ENCODE measurements at regions of chr17 and their contacts with region 1.

Region 1: DNA sequence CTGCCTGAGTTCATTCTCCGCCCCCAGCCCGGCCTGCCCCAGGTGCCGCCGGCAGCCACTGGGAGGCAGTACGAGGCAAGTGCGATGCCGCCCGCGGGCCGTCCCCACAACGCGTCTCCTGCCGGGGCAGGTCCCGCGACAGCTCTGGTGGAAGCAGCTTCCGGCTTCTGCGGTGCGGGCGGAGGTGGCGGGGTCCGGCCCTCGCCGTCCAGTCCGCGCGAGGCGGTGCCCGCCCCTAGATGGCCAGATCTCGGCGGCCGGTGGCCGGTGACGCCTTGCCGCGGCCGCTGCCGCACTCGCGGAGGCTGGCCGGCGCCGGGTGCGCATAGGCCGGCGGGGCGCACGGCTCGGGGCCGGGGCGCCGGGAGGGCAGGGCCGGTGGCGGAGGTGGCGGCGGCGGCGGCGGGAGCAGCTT is 1.8 kb downstream of the GJD3 start:
- DNase-seq: peak; percentile 68 to 87 (median 74)
- ATAC-seq: peak; percentile 82
- H3K4me3 ChIP-seq: peak overlapping the region; percentile 36
- H3K4me3 Mint-ChIP-seq: peak overlapping the region; percentile 14
- H3K27ac ChIP-seq: no peak overlapping the region
- H3K27ac Mint-ChIP-seq: no peak overlapping the region
- H3K4me1 ChIP-seq: peaks cover 23% of the 10 kb centered on the region
- H3K4me1 Mint-ChIP-seq: peaks cover 16% of the 10 kb centered on the region
- H3K27me3 ChIP-seq: peaks cover 0 to 13% of the 10 kb centered on the region in 2 experiments
- H3K27me3 Mint-ChIP-seq: peaks cover 17% of the 10 kb centered on the region
- CTCF ChIP-seq: peak; percentile 56

Region 2: GRCh38 chr17:40018211-40019121 is 344.2 kb before region 1 on chr17:
- CTCF ChIA-PET with region 1: no interaction called
- POLR2A ChIA-PET with region 1: no interaction called
- intact Hi-C with region 1: loop called in 1 of 2 experiments (anchors 5 kb)
- DNase-seq: no peak
- ATAC-seq: no peak
- H3K4me3 ChIP-seq: no peak overlapping the region
- H3K4me3 Mint-ChIP-seq: no peak overlapping the region
- H3K27ac ChIP-seq: no peak overlapping the region
- H3K27ac Mint-ChIP-seq: no peak overlapping the region
- H3K4me1 ChIP-seq: peaks cover 5% of the 10 kb centered on the region
- H3K4me1 Mint-ChIP-seq: peaks cover 6% of the 10 kb centered on the region
- H3K27me3 ChIP-seq: no peaks in the 10 kb centered on the region
- H3K27me3 Mint-ChIP-seq: no peaks in the 10 kb centered on the region
- CTCF ChIP-seq: no peak

Region 3: GRCh38 chr17:40041196-40041595 is 321.5 kb before region 1 on chr17:
- CTCF ChIA-PET with region 1: no interaction called
- POLR2A ChIA-PET with region 1: no interaction called
- intact Hi-C with region 1: no loop called
- DNase-seq: no peak
- ATAC-seq: no peak
- H3K4me3 ChIP-seq: no peak overlapping the region
- H3K4me3 Mint-ChIP-seq: no peak overlapping the region
- H3K27ac ChIP-seq: no peak overlapping the region
- H3K27ac Mint-ChIP-seq: no peak overlapping the region
- H3K4me1 ChIP-seq: no peaks in the 10 kb centered on the region
- H3K4me1 Mint-ChIP-seq: peaks cover 4% of the 10 kb centered on the region
- H3K27me3 ChIP-seq: no peaks in the 10 kb centered on the region
- H3K27me3 Mint-ChIP-seq: no peaks in the 10 kb centered on the region
- CTCF ChIP-seq: no peak

Region 4: DNA sequence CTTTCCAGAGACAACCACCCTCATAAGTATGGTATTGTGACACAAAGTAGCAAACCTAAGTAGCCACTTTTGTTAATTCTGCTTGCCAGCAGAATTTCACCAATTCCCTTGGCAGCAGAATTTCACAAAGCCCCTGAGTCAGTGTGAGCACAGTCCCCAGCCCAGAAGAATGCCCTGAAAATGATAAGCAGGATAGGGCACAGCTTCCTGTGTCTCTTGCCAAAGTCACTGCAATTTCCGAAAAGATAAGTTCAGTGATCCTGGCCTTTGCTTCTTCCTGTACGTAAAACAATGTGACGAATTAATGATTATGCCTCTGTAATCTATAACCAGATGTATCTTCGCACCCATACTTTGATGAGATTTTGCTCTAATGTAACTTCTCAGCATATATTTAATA is 159.6 kb before region 1 on chr17:
- CTCF ChIA-PET with region 1: no interaction called
- POLR2A ChIA-PET with region 1: no interaction called
- intact Hi-C with region 1: loop called in 1 of 2 experiments (anchors 5 kb)
- DNase-seq: no peak
- ATAC-seq: no peak
- H3K4me3 ChIP-seq: no peak overlapping the region
- H3K4me3 Mint-ChIP-seq: no peak overlapping the region
- H3K27ac ChIP-seq: no peak overlapping the region
- H3K27ac Mint-ChIP-seq: no peak overlapping the region
- H3K4me1 ChIP-seq: peaks cover 7% of the 10 kb centered on the region
- H3K4me1 Mint-ChIP-seq: peaks cover 5% of the 10 kb centered on the region
- H3K27me3 ChIP-seq: no peaks in the 10 kb centered on the region
- H3K27me3 Mint-ChIP-seq: peaks cover 9% of the 10 kb centered on the region
- CTCF ChIP-seq: no peak

Region 5: DNA sequence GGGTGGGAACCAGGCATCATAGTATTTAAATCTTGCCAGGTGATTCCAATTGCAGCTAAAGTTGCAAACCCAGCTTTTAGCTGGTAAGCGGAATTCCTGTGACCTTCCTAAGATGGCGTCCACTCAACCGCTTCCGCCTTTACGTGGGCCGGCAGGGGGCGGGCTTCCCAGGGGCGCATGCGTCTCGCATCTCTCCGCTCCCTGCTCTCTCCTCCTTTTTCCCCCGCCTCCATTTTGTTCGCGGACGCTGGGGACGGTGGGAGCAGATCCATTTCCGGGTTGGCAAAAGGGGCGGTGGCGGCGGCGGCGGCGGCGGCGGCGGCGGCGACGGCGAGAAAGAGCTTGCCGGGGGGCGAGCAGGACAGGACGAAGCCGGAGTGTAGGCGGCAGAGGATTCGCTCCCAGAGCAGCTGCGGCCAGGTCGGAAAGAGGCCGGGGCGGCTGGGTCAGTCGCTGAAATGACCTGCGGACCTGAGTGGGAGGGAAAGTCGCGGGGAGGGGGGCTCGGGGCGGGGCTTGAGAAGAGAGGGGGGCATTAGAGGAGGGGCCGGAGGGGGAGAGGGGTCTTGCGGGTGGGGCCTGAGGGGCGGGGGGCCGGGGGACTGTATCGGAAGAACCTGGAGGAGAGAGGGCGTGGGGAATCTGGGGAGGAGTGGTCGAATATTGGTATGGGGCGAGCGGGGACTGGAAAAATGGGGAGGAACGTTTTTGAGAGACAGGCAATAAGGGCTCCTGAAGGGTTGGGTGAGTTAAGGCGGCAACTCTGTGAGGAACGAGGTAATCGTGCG is 143.4 kb before region 1 on chr17 and contains the start of gene WIPF2:
- CTCF ChIA-PET with region 1: no interaction called
- POLR2A ChIA-PET with region 1: no interaction called
- intact Hi-C with region 1: no loop called
- DNase-seq: peak; percentile 91 to 98 (median 95)
- ATAC-seq: peak; percentile 90
- H3K4me3 ChIP-seq: peak within 1 kb of the TSS; percentile 58
- H3K4me3 Mint-ChIP-seq: peak within 1 kb of the TSS; percentile 94
- H3K27ac ChIP-seq: peak within 1 kb of the TSS; percentile 86 to 97
- H3K27ac Mint-ChIP-seq: peak within 1 kb of the TSS; percentile 88
- H3K4me1 ChIP-seq: peaks cover 25% of the 10 kb centered on the region
- H3K4me1 Mint-ChIP-seq: peaks cover 34% of the 10 kb centered on the region
- H3K27me3 ChIP-seq: no peaks in the 10 kb centered on the region
- H3K27me3 Mint-ChIP-seq: no peaks in the 10 kb centered on the region
- CTCF ChIP-seq: peak; percentile 62
- total RNA-seq, gene WIPF2: 17.3 to 21.3 TPM

Region 6: DNA sequence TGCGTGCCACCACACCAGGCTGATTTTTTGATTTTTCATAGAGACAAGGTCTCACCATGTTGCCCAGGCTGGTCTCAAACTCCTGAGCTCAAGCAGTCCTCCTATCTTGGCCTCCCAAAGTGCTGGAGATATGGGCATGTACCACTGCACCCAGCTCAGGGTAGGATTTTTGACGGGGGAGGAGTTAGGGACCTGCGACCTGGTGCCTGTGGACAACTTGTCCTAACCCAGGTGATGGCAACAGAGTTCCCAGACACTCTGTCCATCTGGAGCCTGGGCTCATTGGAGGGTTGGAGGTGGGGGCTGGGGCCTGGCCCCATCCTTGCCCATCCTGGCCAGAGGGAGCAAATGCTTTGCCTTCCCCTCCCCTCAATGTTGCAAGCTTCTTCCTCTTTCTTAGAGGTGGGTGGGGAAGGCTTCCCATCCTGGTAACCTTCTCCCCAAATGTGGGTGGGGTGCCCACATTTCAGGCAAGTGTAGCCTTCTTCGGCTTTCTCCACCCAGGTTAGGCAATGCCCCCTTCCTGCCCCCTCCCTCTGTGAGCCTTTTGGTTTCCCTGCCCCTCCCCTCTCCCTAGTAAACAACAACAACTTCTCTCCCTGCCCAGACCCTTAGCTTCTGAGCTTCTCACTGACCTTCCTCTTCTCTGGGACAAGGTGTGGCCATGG is 28.8 kb before region 1 on chr17:
- CTCF ChIA-PET with region 1: no interaction called
- POLR2A ChIA-PET with region 1: no interaction called
- intact Hi-C with region 1: no loop called
- DNase-seq: peak in 1 of 14 experiments; percentile 21
- ATAC-seq: no peak
- H3K4me3 ChIP-seq: no peak overlapping the region
- H3K4me3 Mint-ChIP-seq: peak overlapping the region; percentile 65
- H3K27ac ChIP-seq: peak overlapping the region in 1 of 2 donors; percentile 52
- H3K27ac Mint-ChIP-seq: peak overlapping the region; percentile 85
- H3K4me1 ChIP-seq: peaks cover 89% of the 10 kb centered on the region
- H3K4me1 Mint-ChIP-seq: peaks cover 73% of the 10 kb centered on the region
- H3K27me3 ChIP-seq: no peaks in the 10 kb centered on the region
- H3K27me3 Mint-ChIP-seq: no peaks in the 10 kb centered on the region
- CTCF ChIP-seq: no peak

Region 7: DNA sequence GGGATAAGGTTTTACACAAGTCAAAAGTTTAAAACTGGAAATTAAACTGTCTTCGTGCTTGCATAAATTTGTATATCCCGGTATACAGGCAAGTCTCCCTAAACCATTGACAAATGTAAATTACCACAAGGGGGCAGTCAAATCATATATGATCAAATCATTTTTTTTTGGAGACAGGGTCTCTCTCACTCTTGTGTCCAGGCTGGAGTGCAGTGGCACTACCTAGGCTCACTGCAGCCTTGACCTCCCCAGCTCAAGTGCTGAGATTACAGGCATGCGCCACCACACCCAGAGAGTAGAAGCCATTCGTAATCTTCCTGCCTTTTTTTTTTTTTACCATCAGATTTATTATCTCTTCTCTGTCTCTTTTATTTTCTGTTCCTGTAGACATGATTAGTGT is 36.5 kb after region 1 on chr17:
- CTCF ChIA-PET with region 1: interaction called, 3 read pairs
- POLR2A ChIA-PET with region 1: no interaction called
- intact Hi-C with region 1: loop called in 1 of 2 experiments (anchors 5 kb)
- DNase-seq: peak in 5 of 14 experiments; percentile 7 to 80 (median 52)
- ATAC-seq: peak; percentile 71
- H3K4me3 ChIP-seq: no peak overlapping the region
- H3K4me3 Mint-ChIP-seq: no peak overlapping the region
- H3K27ac ChIP-seq: no peak overlapping the region
- H3K27ac Mint-ChIP-seq: no peak overlapping the region
- H3K4me1 ChIP-seq: peaks cover 3% of the 10 kb centered on the region
- H3K4me1 Mint-ChIP-seq: peaks cover 22% of the 10 kb centered on the region
- H3K27me3 ChIP-seq: no peaks in the 10 kb centered on the region
- H3K27me3 Mint-ChIP-seq: no peaks in the 10 kb centered on the region
- CTCF ChIP-seq: peak; percentile 91

Region 8: GRCh38 chr17:40443583-40444327 is 81.1 kb after region 1 on chr17:
- CTCF ChIA-PET with region 1: no interaction called
- POLR2A ChIA-PET with region 1: no interaction called
- intact Hi-C with region 1: loop called in 1 of 2 experiments (anchors 2 kb)
- DNase-seq: peak; percentile 41 to 84 (median 66)
- ATAC-seq: peak; percentile 76
- H3K4me3 ChIP-seq: peak overlapping the region; percentile 62
- H3K4me3 Mint-ChIP-seq: peak overlapping the region; percentile 89
- H3K27ac ChIP-seq: no peak overlapping the region
- H3K27ac Mint-ChIP-seq: peak overlapping the region; percentile 85
- H3K4me1 ChIP-seq: peaks cover 46% of the 10 kb centered on the region
- H3K4me1 Mint-ChIP-seq: peaks cover 37% of the 10 kb centered on the region
- H3K27me3 ChIP-seq: no peaks in the 10 kb centered on the region
- H3K27me3 Mint-ChIP-seq: peaks cover 6% of the 10 kb centered on the region
- CTCF ChIP-seq: peak; percentile 63

Region 9: GRCh38 chr17:40480501-40481003 is 117.8 kb after region 1 on chr17:
- CTCF ChIA-PET with region 1: interaction called, 3 read pairs
- POLR2A ChIA-PET with region 1: interaction called, 3 read pairs
- intact Hi-C with region 1: loop called in 1 of 2 experiments (anchors 5 kb)
- DNase-seq: peak; percentile 71 to 96 (median 83)
- ATAC-seq: peak; percentile 87
- H3K4me3 ChIP-seq: no peak overlapping the region
- H3K4me3 Mint-ChIP-seq: peak overlapping the region; percentile 68
- H3K27ac ChIP-seq: peak overlapping the region; percentile 57 to 71
- H3K27ac Mint-ChIP-seq: peak overlapping the region; percentile 97
- H3K4me1 ChIP-seq: peaks cover 80% of the 10 kb centered on the region
- H3K4me1 Mint-ChIP-seq: peaks cover 67% of the 10 kb centered on the region
- H3K27me3 ChIP-seq: no peaks in the 10 kb centered on the region
- H3K27me3 Mint-ChIP-seq: no peaks in the 10 kb centered on the region
- CTCF ChIP-seq: no peak

Region 10: GRCh38 chr17:40499551-40500174 is 137.0 kb after region 1 on chr17:
- CTCF ChIA-PET with region 1: no interaction called
- POLR2A ChIA-PET with region 1: no interaction called
- intact Hi-C with region 1: no loop called
- DNase-seq: no peak
- ATAC-seq: no peak
- H3K4me3 ChIP-seq: no peak overlapping the region
- H3K4me3 Mint-ChIP-seq: no peak overlapping the region
- H3K27ac ChIP-seq: no peak overlapping the region
- H3K27ac Mint-ChIP-seq: no peak overlapping the region
- H3K4me1 ChIP-seq: no peaks in the 10 kb centered on the region
- H3K4me1 Mint-ChIP-seq: no peaks in the 10 kb centered on the region
- H3K27me3 ChIP-seq: no peaks in the 10 kb centered on the region
- H3K27me3 Mint-ChIP-seq: no peaks in the 10 kb centered on the region
- CTCF ChIP-seq: no peak

Region 11: GRCh38 chr17:40726919-40727318 is 364.2 kb after region 1 on chr17:
- CTCF ChIA-PET with region 1: no interaction called
- POLR2A ChIA-PET with region 1: no interaction called
- intact Hi-C with region 1: loop called (anchors 5 kb)
- DNase-seq: peak in 3 of 14 experiments; percentile 29 to 38 (median 33)
- ATAC-seq: no peak
- H3K4me3 ChIP-seq: no peak overlapping the region
- H3K4me3 Mint-ChIP-seq: no peak overlapping the region
- H3K27ac ChIP-seq: no peak overlapping the region
- H3K27ac Mint-ChIP-seq: no peak overlapping the region
- H3K4me1 ChIP-seq: no peaks in the 10 kb centered on the region
- H3K4me1 Mint-ChIP-seq: no peaks in the 10 kb centered on the region
- H3K27me3 ChIP-seq: peaks cover 0 to 24% of the 10 kb centered on the region in 2 experiments
- H3K27me3 Mint-ChIP-seq: peaks cover 41% of the 10 kb centered on the region
- CTCF ChIP-seq: peak; percentile 46

Measured in CD4-positive, alpha-beta T cell (primary cell).